ENCODE measurements at regions of chr7 and their contacts with region 1.

Region 1: DNA sequence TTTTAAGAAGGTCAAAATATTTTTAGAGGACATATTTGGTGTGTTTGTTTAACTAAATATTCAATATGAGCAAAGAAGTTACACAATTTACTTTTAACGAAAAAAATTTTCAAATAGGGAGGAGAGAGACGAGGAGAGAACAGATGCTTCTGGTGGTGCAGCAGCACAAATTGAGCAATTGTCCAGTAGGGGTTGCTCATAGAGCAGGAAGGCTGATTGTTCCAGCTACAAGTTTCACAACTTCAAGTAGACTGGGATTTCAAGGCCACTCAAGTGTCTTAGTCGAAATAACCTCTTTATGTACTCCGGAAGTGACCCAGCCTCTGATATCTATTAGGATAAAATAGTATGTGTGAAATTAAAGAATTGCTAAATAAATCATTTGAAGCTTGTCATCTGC is 197.9 kb downstream of the HDAC9 start:
- DNase-seq: peak; percentile 64
- H3K4me3 ChIP-seq: no peak overlapping the region
- H3K27ac ChIP-seq: no peak overlapping the region
- H3K4me1 ChIP-seq: no peaks in the 10 kb centered on the region
- H3K27me3 ChIP-seq: no peaks in the 10 kb centered on the region
- CTCF ChIP-seq: peak; percentile 34 to 59
- POLR2A ChIP-seq: no peak

Region 2: DNA sequence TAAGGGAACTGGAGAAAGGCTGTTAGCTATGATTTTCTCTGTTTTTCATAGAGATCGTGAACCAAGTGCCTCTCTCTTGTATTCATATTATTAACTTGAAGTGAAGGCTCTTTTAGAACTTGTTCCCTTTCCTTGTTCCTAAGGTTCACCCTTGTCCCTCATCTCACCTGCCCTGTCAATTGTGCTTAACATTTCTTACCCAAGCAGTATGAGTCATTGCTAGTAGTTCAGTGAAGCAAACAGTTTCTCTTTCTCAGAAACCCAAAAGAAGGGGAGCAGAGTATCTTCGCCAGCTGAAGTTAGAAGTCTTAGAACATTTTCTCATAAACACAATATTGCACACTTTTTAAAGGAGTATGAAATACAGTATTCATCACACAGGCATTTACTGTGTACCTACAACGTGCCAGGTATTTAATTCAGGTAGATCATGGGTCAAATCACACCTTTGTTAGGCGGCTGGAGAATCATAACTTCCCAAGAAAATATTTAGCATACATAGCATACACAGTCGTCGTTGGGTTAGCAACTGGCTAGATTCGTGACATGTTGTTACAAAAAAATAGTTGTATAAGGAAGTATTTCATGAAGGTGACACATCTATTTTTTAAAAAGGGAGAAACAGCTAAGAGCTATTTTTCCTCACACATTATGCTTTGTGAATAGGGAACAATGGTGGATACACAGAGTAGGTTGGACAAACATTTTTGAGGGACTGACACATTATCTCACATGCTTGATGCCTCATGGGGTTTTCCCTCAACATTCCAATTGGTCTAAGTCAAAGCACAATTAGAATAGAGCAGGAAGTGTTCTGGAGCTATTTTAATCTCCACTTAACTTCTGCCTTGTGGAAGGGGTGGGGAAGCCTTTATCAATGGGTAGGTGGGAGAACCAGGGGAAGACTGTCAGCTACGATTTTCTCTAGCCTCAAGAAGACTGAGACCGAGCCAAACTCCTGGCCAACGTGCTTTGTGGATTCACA is 184.7 kb before region 1 on chr7:
- CTCF ChIA-PET with region 1: no interaction called
- POLR2A ChIA-PET with region 1: no interaction called
- dilution Hi-C with region 1: no loop called
- intact Hi-C with region 1: no loop called
- DNase-seq: peak; percentile 93
- H3K4me3 ChIP-seq: peak overlapping the region in 1 of 3 experiments; percentile 64
- H3K27ac ChIP-seq: peak overlapping the region; percentile 94
- H3K4me1 ChIP-seq: peaks cover 31% of the 10 kb centered on the region
- H3K27me3 ChIP-seq: no peaks in the 10 kb centered on the region
- CTCF ChIP-seq: no peak
- POLR2A ChIP-seq: no peak

Region 3: DNA sequence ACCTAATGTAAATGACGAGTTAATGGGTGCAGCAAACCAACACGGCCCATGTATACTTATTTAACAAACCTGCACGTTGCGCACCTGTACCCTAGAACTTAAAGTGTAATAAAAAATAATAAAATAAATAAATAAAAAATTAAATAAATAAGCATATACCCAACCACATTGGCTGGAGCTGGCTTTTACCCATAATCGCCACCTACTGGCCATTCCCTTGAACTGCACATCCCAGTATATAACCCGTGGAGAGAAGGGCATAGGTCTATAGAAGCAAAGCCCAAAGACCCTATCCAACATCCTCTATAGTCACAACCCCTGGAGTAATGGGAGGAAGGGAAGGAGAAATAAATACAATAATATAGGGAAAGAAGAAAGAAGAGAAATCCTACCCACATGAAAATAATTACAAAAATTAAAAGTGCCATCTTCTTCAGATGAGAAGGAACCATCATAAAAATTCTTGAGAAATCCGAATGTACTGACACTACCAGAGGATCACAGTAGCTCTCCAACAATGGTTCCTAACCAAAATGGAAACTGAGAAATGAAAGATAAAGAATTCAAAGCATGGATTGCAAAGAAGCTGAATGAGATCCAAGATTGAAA is 358.5 kb after region 1 on chr7:
- CTCF ChIA-PET with region 1: interaction called, 52 read pairs
- POLR2A ChIA-PET with region 1: no interaction called
- dilution Hi-C with region 1: no loop called
- intact Hi-C with region 1: loop called (anchors 1 kb)
- DNase-seq: peak; percentile 42
- H3K4me3 ChIP-seq: no peak overlapping the region
- H3K27ac ChIP-seq: no peak overlapping the region
- H3K4me1 ChIP-seq: no peaks in the 10 kb centered on the region
- H3K27me3 ChIP-seq: no peaks in the 10 kb centered on the region
- CTCF ChIP-seq: peak; percentile 63 to 66
- POLR2A ChIP-seq: no peak

Region 4: DNA sequence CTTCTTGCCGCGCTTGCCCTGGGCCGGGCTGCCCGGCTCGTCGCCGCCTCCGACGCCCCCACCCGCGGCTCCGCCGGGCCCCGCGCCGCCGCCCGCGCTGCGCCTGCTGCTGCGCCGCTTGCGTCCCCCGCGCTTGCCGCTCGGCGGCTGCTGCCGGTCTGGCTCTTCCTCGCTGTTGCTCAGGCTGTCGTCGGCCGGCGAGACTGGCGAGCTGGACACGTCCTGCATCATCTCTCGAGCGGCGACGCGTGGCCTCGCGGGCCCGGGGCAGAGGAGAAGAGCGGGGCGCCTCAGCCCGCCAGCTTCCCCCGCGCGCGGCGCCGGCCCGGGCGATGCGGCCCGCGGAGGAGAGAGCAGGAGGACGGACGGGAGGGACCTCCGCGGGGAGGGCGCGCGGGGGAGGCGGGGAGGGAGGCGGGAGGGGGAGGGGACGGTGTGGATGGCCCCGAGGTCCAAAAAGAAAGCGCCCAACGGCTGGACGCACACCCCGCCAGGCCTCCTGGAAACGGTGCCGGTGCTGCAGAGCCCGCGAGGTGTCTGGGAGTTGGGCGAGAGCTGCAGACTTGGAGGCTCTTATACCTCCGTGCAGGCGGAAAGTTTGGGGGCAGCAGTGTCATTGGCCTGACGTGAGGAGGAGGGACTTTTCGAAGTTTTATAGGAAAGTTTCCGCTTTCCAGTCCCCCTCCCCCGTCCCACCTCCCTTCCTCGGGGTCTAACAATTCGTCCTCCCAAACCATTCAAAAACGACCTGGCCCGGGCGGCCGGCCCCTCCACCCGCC is 423.9 kb after region 1 on chr7 and contains the start of gene TWIST1:
- CTCF ChIA-PET with region 1: interaction called, 21 read pairs
- POLR2A ChIA-PET with region 1: no interaction called
- dilution Hi-C with region 1: no loop called
- intact Hi-C with region 1: loop called (anchors 1 kb)
- DNase-seq: no peak
- H3K4me3 ChIP-seq: peak within 1 kb of the TSS in 2 of 3 experiments; percentile 22 to 37
- H3K27ac ChIP-seq: no peak within 1 kb of the TSS
- H3K4me1 ChIP-seq: peaks cover 13% of the 10 kb centered on the region
- H3K27me3 ChIP-seq: peaks cover 70 to 94% of the 10 kb centered on the region in 2 experiments
- CTCF ChIP-seq: no peak
- POLR2A ChIP-seq: no peak
- total RNA-seq, gene TWIST1: not detected in 2 replicates

Region 5: GRCh38 chr7:19491821-19492452 is 798.5 kb after region 1 on chr7:
- CTCF ChIA-PET with region 1: interaction called, 20 read pairs
- POLR2A ChIA-PET with region 1: no interaction called
- dilution Hi-C with region 1: no loop called
- intact Hi-C with region 1: no loop called
- DNase-seq: peak; percentile 54
- H3K4me3 ChIP-seq: no peak overlapping the region
- H3K27ac ChIP-seq: no peak overlapping the region
- H3K4me1 ChIP-seq: no peaks in the 10 kb centered on the region
- H3K27me3 ChIP-seq: no peaks in the 10 kb centered on the region
- CTCF ChIP-seq: peak; percentile 30 to 37
- POLR2A ChIP-seq: no peak

Region 6: GRCh38 chr7:19665399-19666008 is 972.1 kb after region 1 on chr7:
- CTCF ChIA-PET with region 1: interaction called, 10 read pairs
- POLR2A ChIA-PET with region 1: no interaction called
- dilution Hi-C with region 1: no loop called
- intact Hi-C with region 1: loop called (anchors 5 kb)
- DNase-seq: peak; percentile 31
- H3K4me3 ChIP-seq: no peak overlapping the region
- H3K27ac ChIP-seq: no peak overlapping the region
- H3K4me1 ChIP-seq: no peaks in the 10 kb centered on the region
- H3K27me3 ChIP-seq: peaks cover 2 to 11% of the 10 kb centered on the region in 2 experiments
- CTCF ChIP-seq: peak in 1 of 2 donors; percentile 32
- POLR2A ChIP-seq: no peak